ENCODE measurements at regions of chr17 and their contacts with region 1.

Region 1: GRCh38 chr17:47310186-47310970 is 13.4 kb upstream of the EFCAB13 start:
- DNase-seq: no peak
- H3K4me3 ChIP-seq: no peak overlapping the region
- H3K27ac ChIP-seq: no peak overlapping the region
- H3K27me3 ChIP-seq: no peaks in the 10 kb centered on the region
- CTCF ChIP-seq: no peak

Region 2: DNA sequence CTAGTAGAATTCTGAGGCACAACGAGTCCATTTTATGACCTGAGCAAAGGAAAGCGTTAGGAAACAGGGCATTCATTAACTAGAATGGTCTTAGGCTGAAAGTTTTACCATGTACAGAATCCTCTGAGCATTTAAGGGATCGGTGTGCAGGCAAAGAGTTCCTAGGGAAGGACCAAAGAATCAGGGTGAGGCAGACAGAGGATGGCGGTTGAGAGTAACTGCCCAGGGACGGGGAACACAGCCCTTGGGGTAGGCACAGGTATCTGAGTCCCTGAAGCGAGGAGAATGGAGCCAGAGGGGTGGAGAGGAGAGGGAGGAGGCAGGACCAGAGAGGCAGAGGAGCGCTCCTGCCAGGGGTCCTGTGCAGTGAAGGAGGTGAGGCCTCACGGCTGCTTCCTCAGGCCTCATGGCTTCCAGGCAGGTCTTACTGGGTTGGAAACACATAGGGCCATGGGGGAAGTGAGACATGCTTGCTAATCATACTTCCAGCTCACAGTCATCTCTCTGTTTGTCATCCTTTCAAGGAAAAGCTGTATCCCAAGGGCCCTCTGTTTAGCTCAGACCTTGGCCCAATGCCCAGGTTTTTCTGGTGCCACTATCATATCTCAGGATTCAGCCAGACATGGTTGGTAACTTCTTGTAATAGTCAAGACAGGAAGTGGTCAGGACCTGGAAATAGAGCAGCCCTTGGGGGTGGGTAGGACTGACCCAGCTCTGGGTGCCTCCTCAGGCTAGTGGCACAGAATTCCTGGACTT is 70.6 kb before region 1 on chr17:
- intact Hi-C with region 1: loop called in 1 of 2 experiments (anchors 5 kb)
- DNase-seq: peak in 6 of 10 donors; percentile 11 to 69 (median 58)
- H3K4me3 ChIP-seq: no peak overlapping the region
- H3K27ac ChIP-seq: peak overlapping the region in 43 of 59 donors; percentile 6 to 85 (median 63)
- H3K27me3 ChIP-seq: no peaks in the 10 kb centered on the region
- CTCF ChIP-seq: no peak

Measured in dorsolateral prefrontal cortex (tissue), 120 donors.